Colonic mucosa (tissue), 4 donors: ENCODE measurements at regions of chr9 and their contacts with region 1.

Region 1: GRCh38 chr9:96232539-96233241 is 69.3 kb downstream of the HSD17B3 start:
- DNase-seq: peak; percentile 43
- H3K4me3 ChIP-seq: no peak overlapping the region
- H3K27ac ChIP-seq: no peak overlapping the region
- H3K4me1 ChIP-seq: no peaks in the 10 kb centered on the region
- H3K27me3 ChIP-seq: no peaks in the 10 kb centered on the region
- CTCF ChIP-seq: peak; percentile 74

Region 2: GRCh38 chr9:95875305-95876137 is 357.2 kb before region 1 on chr9 and contains the start of gene ERCC6L2:
- intact Hi-C with region 1: no loop called
- DNase-seq: peak; percentile 95
- H3K4me3 ChIP-seq: no peak within 1 kb of the TSS
- H3K27ac ChIP-seq: no peak within 1 kb of the TSS
- H3K4me1 ChIP-seq: peaks cover 5% of the 10 kb centered on the region
- H3K27me3 ChIP-seq: no peaks in the 10 kb centered on the region
- CTCF ChIP-seq: no peak
- total RNA-seq, gene ERCC6L2: 21.5 to 36.4 TPM

Region 3: DNA sequence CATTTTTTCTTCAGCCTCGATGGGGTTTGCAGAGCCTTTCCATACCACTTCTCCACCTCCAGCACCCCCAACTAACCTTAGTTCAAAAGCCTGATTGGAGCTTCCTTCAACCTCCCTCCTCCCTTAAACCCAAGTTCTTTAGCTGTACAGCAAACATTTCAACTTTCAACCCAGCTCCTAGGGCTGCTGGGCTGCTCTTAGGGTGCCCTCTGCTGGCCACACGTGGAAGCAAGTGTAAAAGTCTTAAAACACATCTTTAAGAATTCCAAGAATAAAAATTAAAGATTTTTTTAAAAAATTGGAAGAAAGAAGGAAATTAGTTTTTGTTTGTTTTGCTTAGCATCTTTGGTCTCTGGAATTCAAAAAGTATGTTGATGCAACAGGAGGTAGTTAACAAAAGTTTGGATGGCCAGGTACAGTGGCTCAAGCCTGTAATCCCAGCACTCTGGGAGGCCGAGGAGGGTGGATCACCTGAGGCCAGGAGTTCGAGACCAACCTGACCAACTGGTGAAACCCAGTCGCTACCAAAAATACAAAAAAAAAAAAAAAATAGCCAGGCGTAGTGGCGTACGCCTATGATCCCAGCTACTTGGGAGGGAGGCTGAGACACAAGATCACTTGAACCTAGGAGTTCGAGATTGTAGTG is 84.8 kb after region 1 on chr9:
- intact Hi-C with region 1: loop called (anchors 2 kb)
- DNase-seq: peak; percentile 41
- H3K4me3 ChIP-seq: no peak overlapping the region
- H3K27ac ChIP-seq: no peak overlapping the region
- H3K4me1 ChIP-seq: no peaks in the 10 kb centered on the region
- H3K27me3 ChIP-seq: no peaks in the 10 kb centered on the region
- CTCF ChIP-seq: peak; percentile 83

Region 4: GRCh38 chr9:96661711-96662110 is 429.0 kb after region 1 on chr9:
- intact Hi-C with region 1: loop called (anchors 10 kb)
- DNase-seq: no peak
- H3K4me3 ChIP-seq: no peak overlapping the region
- H3K27ac ChIP-seq: no peak overlapping the region
- H3K4me1 ChIP-seq: no peaks in the 10 kb centered on the region
- H3K27me3 ChIP-seq: no peaks in the 10 kb centered on the region
- CTCF ChIP-seq: no peak